Heart right ventricle (tissue), 16 donors: ENCODE measurements at regions of chr19 and their contacts with region 1.

Region 1: GRCh38 chr19:2269244-2269947 is 12.6 kb downstream of the PEAK3 start:
- DNase-seq: peak; percentile 99
- ATAC-seq: peak; percentile 86 to 93 (median 90)
- H3K4me3 ChIP-seq: peak overlapping the region; percentile 89 to 100 (median 100)
- H3K27ac ChIP-seq: peak overlapping the region; percentile 94 to 100 (median 99)
- H3K4me1 ChIP-seq: peaks cover 15 to 77% (median 46%) of the 10 kb centered on the region in 9 donors
- H3K27me3 ChIP-seq: no peaks in the 10 kb centered on the region
- CTCF ChIP-seq: peak in 1 of 9 donors; percentile 17

Region 2: GRCh38 chr19:1725100-1726064 is 544.0 kb before region 1 on chr19:
- intact Hi-C with region 1: no loop called
- DNase-seq: peak in 1 of 2 donors; percentile 60
- ATAC-seq: peak in 5 of 8 donors; percentile 51 to 88 (median 62)
- H3K4me3 ChIP-seq: peak overlapping the region in 9 of 10 donors; percentile 32 to 54 (median 47)
- H3K27ac ChIP-seq: no peak overlapping the region
- H3K4me1 ChIP-seq: peaks cover 0 to 10% (median 6%) of the 10 kb centered on the region in 9 donors
- H3K27me3 ChIP-seq: peaks cover 0 to 96% (median 82%) of the 10 kb centered on the region in 7 donors
- CTCF ChIP-seq: no peak

Region 3: GRCh38 chr19:2161688-2162053 is 107.7 kb before region 1 on chr19:
- intact Hi-C with region 1: loop called in 8 of 10 experiments (anchors 1 to 10 kb)
- DNase-seq: no peak
- ATAC-seq: no peak
- H3K4me3 ChIP-seq: no peak overlapping the region
- H3K27ac ChIP-seq: no peak overlapping the region
- H3K4me1 ChIP-seq: peaks cover 11 to 32% (median 25%) of the 10 kb centered on the region in 9 donors
- H3K27me3 ChIP-seq: no peaks in the 10 kb centered on the region
- CTCF ChIP-seq: no peak

Region 4: DNA sequence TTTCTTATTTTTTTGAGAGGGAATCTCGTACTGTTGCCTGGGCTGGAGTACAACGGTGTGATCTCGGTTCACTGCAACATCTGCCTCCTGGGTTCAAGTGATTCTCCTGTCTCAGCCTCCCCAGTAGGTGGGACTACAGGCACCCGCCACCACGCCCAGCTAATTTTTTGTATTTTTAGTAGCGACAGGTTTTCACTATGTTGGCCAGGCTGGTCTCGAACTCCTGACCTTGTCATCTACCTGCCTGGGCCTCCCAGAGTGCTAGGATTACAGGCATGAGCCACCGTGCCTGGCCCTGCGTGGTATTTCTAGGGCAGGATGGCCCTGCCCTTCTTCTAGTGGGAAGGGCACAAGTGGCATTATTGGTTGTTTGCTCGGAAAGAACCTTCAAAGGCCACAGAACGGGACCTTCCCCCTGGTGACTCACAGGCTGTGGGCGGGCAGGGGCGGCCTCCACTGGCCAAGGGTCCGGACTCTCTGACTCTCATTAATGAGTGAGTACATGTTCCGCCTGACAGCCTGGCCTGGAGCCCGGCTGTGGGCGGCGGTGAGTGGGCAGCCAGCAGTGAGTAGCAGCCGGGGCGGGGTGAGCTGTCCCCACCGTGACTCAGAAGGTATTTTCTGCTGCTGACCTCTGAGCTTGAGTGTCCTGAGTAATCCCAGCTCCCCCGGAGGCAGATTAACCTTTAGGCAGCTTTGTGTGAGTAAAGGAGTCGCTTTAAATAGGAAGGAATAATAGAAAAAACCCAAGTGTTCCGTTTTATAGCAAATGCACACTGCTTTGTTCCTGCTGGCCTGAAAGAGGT is 100.6 kb before region 1 on chr19:
- intact Hi-C with region 1: loop called in 1 of 10 experiments (anchors 2 kb)
- DNase-seq: peak; percentile 94 to 96
- ATAC-seq: peak; percentile 83 to 95 (median 92)
- H3K4me3 ChIP-seq: peak overlapping the region in 6 of 10 donors; percentile 22 to 35 (median 26)
- H3K27ac ChIP-seq: peak overlapping the region; percentile 80 to 95 (median 92)
- H3K4me1 ChIP-seq: peaks cover 59 to 93% (median 86%) of the 10 kb centered on the region in 9 donors
- H3K27me3 ChIP-seq: no peaks in the 10 kb centered on the region
- CTCF ChIP-seq: peak in 1 of 9 donors; percentile 39

Region 5: DNA sequence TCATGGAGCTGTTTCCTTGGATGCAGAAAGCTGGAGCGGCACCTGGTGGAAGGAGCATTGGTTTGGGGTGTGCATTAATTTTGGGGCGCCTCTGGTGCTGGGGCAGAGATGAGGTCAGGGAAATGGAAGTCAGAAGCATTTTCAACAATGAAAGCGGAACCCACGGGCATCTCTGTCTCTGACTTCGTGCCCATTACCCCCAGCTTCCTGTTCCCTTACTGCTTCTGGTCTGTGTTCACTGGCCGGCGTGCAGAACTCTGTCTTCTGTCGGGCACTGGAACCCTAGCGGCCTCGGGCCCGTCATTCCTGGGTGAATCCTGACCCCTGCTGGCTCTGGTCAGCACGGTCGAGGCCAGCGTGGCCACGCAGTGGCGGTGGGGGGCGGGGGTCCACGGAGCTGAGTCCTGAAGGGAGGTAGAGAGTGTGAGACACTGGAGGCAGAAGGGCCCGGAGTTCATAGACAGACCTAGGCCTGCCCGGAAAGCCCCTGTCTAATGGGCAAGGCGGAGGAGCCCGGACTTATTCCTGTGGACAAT is 46.5 kb after region 1 on chr19:
- intact Hi-C with region 1: loop called in 2 of 10 experiments (anchors 2 kb)
- DNase-seq: peak; percentile 71 to 72
- ATAC-seq: peak; percentile 89 to 94 (median 93)
- H3K4me3 ChIP-seq: no peak overlapping the region
- H3K27ac ChIP-seq: peak overlapping the region in 1 of 10 donors; percentile 70
- H3K4me1 ChIP-seq: peaks cover 0 to 22% (median 6%) of the 10 kb centered on the region in 9 donors
- H3K27me3 ChIP-seq: peaks cover 0 to 27% (median 26%) of the 10 kb centered on the region in 7 donors
- CTCF ChIP-seq: peak; percentile 31 to 76 (median 69)

Region 6: GRCh38 chr19:2391118-2391725 is 121.8 kb after region 1 on chr19:
- intact Hi-C with region 1: loop called in 2 of 10 experiments (anchors 5 to 10 kb)
- DNase-seq: peak in 1 of 2 donors; percentile 35
- ATAC-seq: peak in 5 of 8 donors; percentile 33 to 71 (median 43)
- H3K4me3 ChIP-seq: no peak overlapping the region
- H3K27ac ChIP-seq: no peak overlapping the region
- H3K4me1 ChIP-seq: peaks cover 0 to 5% (median 0%) of the 10 kb centered on the region in 9 donors
- H3K27me3 ChIP-seq: peaks cover 0 to 31% (median 6%) of the 10 kb centered on the region in 7 donors
- CTCF ChIP-seq: peak; percentile 62 to 82 (median 74)